Heart right ventricle (tissue), 16 donors: ENCODE measurements at regions of chr1 and their contacts with region 1.

Region 1: DNA sequence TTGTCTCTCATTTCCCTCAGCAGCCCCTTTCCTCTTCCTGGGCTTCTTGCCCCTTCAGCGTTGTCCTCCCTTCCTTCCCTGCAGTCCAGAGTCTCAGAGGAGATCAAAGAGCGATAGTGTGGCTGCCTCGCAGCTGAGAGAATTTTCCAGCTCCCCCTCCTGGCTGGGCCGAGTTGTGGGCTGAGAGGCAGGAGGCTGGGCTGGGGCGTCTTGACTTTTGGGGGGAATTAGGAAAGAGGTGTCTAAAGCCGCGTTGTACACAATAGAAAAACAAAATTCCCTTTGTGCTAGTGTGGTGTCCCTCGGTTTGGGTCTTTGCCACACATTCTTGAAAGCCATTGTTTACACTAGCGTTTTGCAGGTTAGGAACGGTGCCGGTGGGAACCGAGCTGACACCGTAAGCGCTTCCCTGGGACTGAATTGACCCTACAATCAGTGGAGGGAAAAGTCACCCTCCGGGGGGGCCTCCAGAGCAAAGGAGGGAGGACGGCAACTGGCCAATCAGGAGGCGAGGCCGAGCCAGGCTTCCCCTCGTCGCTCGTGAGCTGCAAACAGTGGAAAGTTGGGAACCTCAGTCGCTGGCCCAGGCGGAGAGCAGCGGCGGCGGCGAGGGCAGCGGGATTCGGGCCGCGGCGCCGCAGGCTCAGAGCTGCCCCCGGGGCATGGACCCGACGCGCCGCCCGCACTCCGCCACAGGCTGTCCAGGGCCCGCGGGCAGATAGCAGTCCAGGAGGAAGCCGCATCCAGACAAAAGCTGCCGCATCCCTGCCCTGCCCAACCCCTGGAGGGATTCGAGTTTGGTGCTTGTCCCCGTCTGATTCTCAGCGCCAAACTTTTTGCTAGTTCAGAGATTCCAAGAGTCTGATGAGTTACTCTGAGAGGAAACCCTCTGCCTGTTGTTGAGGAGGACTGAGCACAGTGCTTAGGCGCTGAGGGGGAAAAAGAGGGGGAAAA is at the start of gene HMCN1:
- DNase-seq: peak; percentile 82 to 84
- ATAC-seq: peak; percentile 91 to 98 (median 94)
- H3K4me3 ChIP-seq: peak within 1 kb of the TSS; percentile 27 to 75 (median 62)
- H3K27ac ChIP-seq: peak within 1 kb of the TSS; percentile 12 to 87 (median 79)
- H3K4me1 ChIP-seq: peaks cover 0 to 18% (median 4%) of the 10 kb centered on the region in 9 donors
- H3K27me3 ChIP-seq: peaks cover 0 to 48% (median 0%) of the 10 kb centered on the region in 7 donors
- CTCF ChIP-seq: peak in 7 of 9 donors; percentile 18 to 55 (median 39)
- total RNA-seq, gene HMCN1: 4.6 to 12.4 (median 8.0) TPM

Region 2: DNA sequence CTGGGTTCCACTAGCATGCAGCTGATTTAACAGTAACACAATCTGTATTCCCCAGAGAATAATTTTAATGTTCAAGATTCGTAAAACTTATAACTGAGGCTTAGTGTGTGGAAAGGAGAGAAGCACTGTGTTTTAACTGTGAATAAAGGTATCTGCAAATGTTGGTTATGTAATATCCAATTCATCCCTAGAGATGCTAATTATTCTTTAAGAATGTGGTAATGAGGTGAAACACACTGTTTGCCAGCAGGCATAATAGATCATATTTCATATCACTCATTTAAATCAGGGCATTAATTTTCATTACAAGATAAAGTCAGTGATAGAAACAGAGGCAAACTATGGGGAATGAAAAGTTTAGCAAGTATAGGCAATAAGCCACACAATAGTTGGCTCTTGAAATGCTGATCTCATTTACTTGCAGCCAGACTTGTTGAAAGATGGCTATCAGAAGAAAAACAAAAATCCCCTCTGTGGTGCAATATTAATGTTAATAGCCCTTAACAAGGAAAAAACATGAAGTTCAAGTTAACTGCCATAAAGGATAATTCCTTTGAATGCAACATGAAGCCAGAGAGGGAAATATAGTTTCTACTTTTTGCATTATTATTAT is 33.5 kb after region 1 on chr1:
- intact Hi-C with region 1: no loop called
- DNase-seq: no peak
- ATAC-seq: no peak
- H3K4me3 ChIP-seq: no peak overlapping the region
- H3K27ac ChIP-seq: no peak overlapping the region
- H3K4me1 ChIP-seq: peaks cover 0 to 3% (median 0%) of the 10 kb centered on the region in 9 donors
- H3K27me3 ChIP-seq: no peaks in the 10 kb centered on the region
- CTCF ChIP-seq: no peak

Region 3: GRCh38 chr1:185813401-185813979 is 79.4 kb after region 1 on chr1:
- intact Hi-C with region 1: loop called in 1 of 10 experiments (anchors 10 kb)
- DNase-seq: peak in 1 of 2 donors; percentile 13
- ATAC-seq: no peak
- H3K4me3 ChIP-seq: no peak overlapping the region
- H3K27ac ChIP-seq: no peak overlapping the region
- H3K4me1 ChIP-seq: peaks cover 0 to 5% (median 0%) of the 10 kb centered on the region in 9 donors
- H3K27me3 ChIP-seq: no peaks in the 10 kb centered on the region
- CTCF ChIP-seq: peak in 8 of 9 donors; percentile 19 to 76 (median 56)